GM12878 (cell line): ENCODE measurements at regions of chr2 and their contacts with region 1.

Region 1: DNA sequence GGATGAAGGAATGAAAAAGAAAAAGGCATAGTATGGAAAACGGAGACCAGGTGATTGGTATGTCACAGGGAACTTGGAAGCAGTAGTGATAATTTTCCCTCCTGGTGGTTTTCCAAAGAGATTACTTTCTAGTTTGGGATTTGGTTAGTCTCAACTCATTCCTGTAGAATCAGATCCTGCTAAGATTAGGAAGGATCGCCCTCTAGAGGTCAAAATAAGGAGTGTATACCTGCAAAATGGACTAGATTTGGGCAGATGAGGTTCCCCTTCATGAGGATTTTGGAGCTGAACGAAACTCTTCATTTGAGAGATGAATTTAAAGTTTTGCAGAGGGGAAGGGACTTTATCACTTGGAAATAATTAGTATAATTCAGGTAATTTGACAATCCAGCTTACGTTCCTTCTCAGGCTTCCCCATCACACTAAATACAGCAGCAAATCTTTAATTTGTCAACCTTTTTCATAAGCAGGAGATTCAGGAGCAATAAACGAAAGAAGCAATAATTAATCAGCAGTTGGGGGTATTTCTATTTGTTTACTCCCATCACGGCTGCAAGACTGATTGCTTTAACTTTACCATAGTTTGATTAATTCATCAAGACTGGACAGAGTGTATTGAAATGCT is 65.2 kb downstream of the CCDC195 start:
- DNase-seq: no peak
- ATAC-seq: peak; percentile 89
- H3K4me3 ChIP-seq: no peak overlapping the region
- H3K27ac ChIP-seq: no peak overlapping the region
- H3K4me1 ChIP-seq: no peaks in the 10 kb centered on the region
- H3K27me3 ChIP-seq: no peaks in the 10 kb centered on the region
- CTCF ChIP-seq: peak; percentile 71 to 73 (median 72)
- EP300 ChIP-seq: no peak
- POLR2A ChIP-seq: no peak
- RAD21 ChIP-seq: peak; percentile 93

Region 2: GRCh38 chr2:223970343-223971128 is 680.4 kb before region 1 on chr2:
- CTCF ChIA-PET with region 1: interaction called, 6 read pairs
- POLR2A ChIA-PET with region 1: no interaction called
- RAD21 ChIA-PET with region 1: interaction called, 6 read pairs
- SMC1A ChIA-PET with region 1: interaction called, 6 read pairs
- in situ Hi-C with region 1: loop called (anchors 25 kb)
- intact Hi-C with region 1: loop called (anchors 10 kb)
- DNase-seq: no peak
- ATAC-seq: peak; percentile 87
- H3K4me3 ChIP-seq: no peak overlapping the region
- H3K27ac ChIP-seq: no peak overlapping the region
- H3K4me1 ChIP-seq: no peaks in the 10 kb centered on the region
- H3K27me3 ChIP-seq: no peaks in the 10 kb centered on the region
- CTCF ChIP-seq: peak; percentile 73 to 91 (median 85); a peak in 5 of 6 replicates
- EP300 ChIP-seq: no peak
- POLR2A ChIP-seq: no peak
- RAD21 ChIP-seq: peak; percentile 84

Region 3: DNA sequence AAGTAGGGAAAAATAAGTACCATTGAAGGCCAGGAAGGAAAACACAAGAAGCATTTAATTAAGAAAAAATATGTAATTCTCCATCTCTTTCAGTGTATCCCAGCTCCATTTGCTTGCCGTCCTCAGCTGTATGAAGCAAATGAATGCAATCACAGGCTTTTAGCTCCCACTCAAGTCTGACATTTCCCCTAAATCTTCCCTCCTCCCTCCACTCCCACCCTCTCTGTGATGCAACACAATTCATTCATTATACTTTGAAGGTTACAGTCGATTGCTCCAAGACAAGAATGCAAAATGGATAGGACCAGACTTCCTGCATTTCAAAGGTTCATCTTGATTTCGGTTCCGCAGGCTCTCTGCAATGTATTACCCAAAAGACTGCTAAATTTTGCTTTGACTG is 439.1 kb before region 1 on chr2:
- CTCF ChIA-PET with region 1: no interaction called
- POLR2A ChIA-PET with region 1: no interaction called
- RAD21 ChIA-PET with region 1: no interaction called
- SMC1A ChIA-PET with region 1: no interaction called
- in situ Hi-C with region 1: no loop called
- intact Hi-C with region 1: no loop called
- DNase-seq: no peak
- ATAC-seq: no peak
- H3K4me3 ChIP-seq: no peak overlapping the region
- H3K27ac ChIP-seq: no peak overlapping the region
- H3K4me1 ChIP-seq: no peaks in the 10 kb centered on the region
- H3K27me3 ChIP-seq: no peaks in the 10 kb centered on the region; a peak in 1 of 4 replicates
- CTCF ChIP-seq: no peak
- EP300 ChIP-seq: no peak
- POLR2A ChIP-seq: no peak
- RAD21 ChIP-seq: no peak

Region 4: DNA sequence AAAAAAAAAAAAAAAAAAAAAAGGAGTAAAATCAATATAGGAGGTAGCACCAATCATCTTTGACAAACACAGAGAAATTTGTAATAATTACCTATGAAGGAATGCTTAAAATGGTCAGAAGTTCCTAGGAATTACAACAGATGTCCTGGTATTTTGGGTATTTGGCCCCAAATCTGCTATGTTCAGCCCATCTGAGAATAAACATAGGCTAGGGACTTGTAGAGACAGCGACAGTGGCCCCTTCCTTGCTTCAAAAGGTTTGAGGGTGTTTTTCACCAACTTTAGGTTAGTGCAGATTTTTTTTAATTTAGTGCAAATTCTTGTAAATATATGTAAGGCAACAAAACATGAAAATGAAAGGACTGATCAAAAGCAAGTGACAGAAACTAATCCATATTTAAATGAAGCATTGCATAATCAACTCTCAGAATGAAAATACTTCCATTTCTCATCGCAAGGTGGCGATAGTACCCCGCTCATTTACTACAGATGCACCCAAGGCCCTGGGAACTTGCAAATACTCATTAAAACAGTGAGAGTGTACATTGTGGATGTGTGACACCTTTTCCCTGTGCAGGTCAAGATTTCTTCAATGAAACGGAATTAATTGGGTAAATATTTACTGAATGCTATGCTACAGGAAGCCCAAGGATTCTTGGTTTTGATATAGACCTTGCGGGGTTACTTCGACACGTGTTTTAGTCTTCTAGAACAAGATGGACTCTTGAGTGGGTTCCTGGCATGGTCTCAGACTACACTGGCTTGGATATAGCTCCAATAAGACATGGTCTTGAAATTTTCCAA is 293.6 kb before region 1 on chr2:
- CTCF ChIA-PET with region 1: interaction called, 54 read pairs
- POLR2A ChIA-PET with region 1: no interaction called
- RAD21 ChIA-PET with region 1: interaction called, 32 read pairs
- SMC1A ChIA-PET with region 1: interaction called, 21 read pairs
- in situ Hi-C with region 1: loop called (anchors 5 kb)
- intact Hi-C with region 1: loop called (anchors 1 kb)
- DNase-seq: peak; percentile 11
- ATAC-seq: peak; percentile 93
- H3K4me3 ChIP-seq: no peak overlapping the region
- H3K27ac ChIP-seq: no peak overlapping the region
- H3K4me1 ChIP-seq: no peaks in the 10 kb centered on the region
- H3K27me3 ChIP-seq: no peaks in the 10 kb centered on the region; a peak in 2 of 4 replicates
- CTCF ChIP-seq: peak; percentile 63 to 88 (median 68); a peak in 5 of 6 replicates
- EP300 ChIP-seq: no peak
- POLR2A ChIP-seq: no peak
- RAD21 ChIP-seq: peak; percentile 90

Region 5: GRCh38 chr2:224449212-224450147 is 201.4 kb before region 1 on chr2:
- CTCF ChIA-PET with region 1: interaction called, 10 read pairs
- POLR2A ChIA-PET with region 1: no interaction called
- RAD21 ChIA-PET with region 1: interaction called, 5 read pairs
- SMC1A ChIA-PET with region 1: interaction called, 14 read pairs
- in situ Hi-C with region 1: no loop called
- intact Hi-C with region 1: no loop called
- DNase-seq: no peak
- ATAC-seq: peak; percentile 79
- H3K4me3 ChIP-seq: no peak overlapping the region
- H3K27ac ChIP-seq: no peak overlapping the region
- H3K4me1 ChIP-seq: no peaks in the 10 kb centered on the region
- H3K27me3 ChIP-seq: no peaks in the 10 kb centered on the region; a peak in 1 of 4 replicates
- CTCF ChIP-seq: peak; percentile 53 to 70 (median 61)
- EP300 ChIP-seq: no peak
- POLR2A ChIP-seq: no peak
- RAD21 ChIP-seq: peak; percentile 34; the same call in 1 of the 2 replicates

Region 6: GRCh38 chr2:224492531-224492930 is 158.4 kb before region 1 on chr2:
- CTCF ChIA-PET with region 1: interaction called, 5 read pairs
- POLR2A ChIA-PET with region 1: no interaction called
- RAD21 ChIA-PET with region 1: no interaction called
- SMC1A ChIA-PET with region 1: interaction called, 6 read pairs
- in situ Hi-C with region 1: no loop called
- intact Hi-C with region 1: loop called (anchors 10 kb)
- DNase-seq: no peak
- ATAC-seq: no peak
- H3K4me3 ChIP-seq: no peak overlapping the region
- H3K27ac ChIP-seq: no peak overlapping the region
- H3K4me1 ChIP-seq: no peaks in the 10 kb centered on the region
- H3K27me3 ChIP-seq: no peaks in the 10 kb centered on the region
- CTCF ChIP-seq: no peak
- EP300 ChIP-seq: no peak
- POLR2A ChIP-seq: no peak
- RAD21 ChIP-seq: no peak

Region 7: GRCh38 chr2:224585205-224586088 is 65.5 kb before region 1 on chr2 and contains the start of gene CUL3:
- CTCF ChIA-PET with region 1: interaction called, 16 read pairs
- POLR2A ChIA-PET with region 1: interaction called, 3 read pairs
- RAD21 ChIA-PET with region 1: interaction called, 3 read pairs
- SMC1A ChIA-PET with region 1: interaction called, 4 read pairs
- in situ Hi-C with region 1: no loop called
- intact Hi-C with region 1: loop called (anchors 5 kb)
- DNase-seq: peak; percentile 90
- ATAC-seq: peak; percentile 88
- H3K4me3 ChIP-seq: peak within 1 kb of the TSS; percentile 96
- H3K27ac ChIP-seq: peak within 1 kb of the TSS; percentile 88
- H3K4me1 ChIP-seq: no peaks in the 10 kb centered on the region
- H3K27me3 ChIP-seq: no peaks in the 10 kb centered on the region
- CTCF ChIP-seq: no peak
- EP300 ChIP-seq: 0 out of 4 replicates have a peak, but pooled peaks of 1 of the 2 experiments have one; percentile 10
- POLR2A ChIP-seq: peak; percentile 90
- RAD21 ChIP-seq: no peak
- polyA plus RNA-seq, gene CUL3: 49.0 to 71.9 TPM

Region 8: GRCh38 chr2:224638301-224638823 is 12.6 kb before region 1 on chr2:
- CTCF ChIA-PET with region 1: interaction called, 35 read pairs
- POLR2A ChIA-PET with region 1: no interaction called
- RAD21 ChIA-PET with region 1: interaction called, 4 read pairs
- SMC1A ChIA-PET with region 1: interaction called, 7 read pairs
- in situ Hi-C with region 1: no loop called
- intact Hi-C with region 1: no loop called
- DNase-seq: peak; percentile 55
- ATAC-seq: peak; percentile 93
- H3K4me3 ChIP-seq: no peak overlapping the region
- H3K27ac ChIP-seq: peak overlapping the region; percentile 32; the same call in 1 of the 2 replicates
- H3K4me1 ChIP-seq: peaks cover 4% of the 10 kb centered on the region; the same call in 1 of the 2 replicates
- H3K27me3 ChIP-seq: no peaks in the 10 kb centered on the region
- CTCF ChIP-seq: no peak
- EP300 ChIP-seq: 0 out of 4 replicates have a peak, but pooled peaks of 1 of the 2 experiments have one; percentile 28
- POLR2A ChIP-seq: no peak
- RAD21 ChIP-seq: no peak

Region 9: DNA sequence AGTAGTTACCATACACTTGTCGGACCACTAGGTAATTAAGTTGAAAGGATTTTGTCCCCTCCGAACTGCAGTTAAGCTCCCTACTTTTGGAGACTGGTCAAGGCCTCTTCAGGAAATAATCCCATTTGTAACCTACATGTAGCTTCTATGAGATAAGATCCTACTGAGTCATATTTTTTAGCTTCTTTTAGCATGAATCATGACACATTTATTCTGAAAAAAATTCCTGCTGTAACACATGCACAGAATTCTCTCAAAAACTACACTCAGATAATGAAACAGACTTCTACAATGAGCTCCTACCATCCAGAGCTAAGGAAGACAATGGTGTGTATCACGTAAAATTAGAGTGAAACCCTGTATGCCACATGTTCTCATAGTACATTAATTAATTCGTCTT is 165.9 kb after region 1 on chr2:
- CTCF ChIA-PET with region 1: no interaction called
- POLR2A ChIA-PET with region 1: no interaction called
- RAD21 ChIA-PET with region 1: no interaction called
- SMC1A ChIA-PET with region 1: no interaction called
- in situ Hi-C with region 1: no loop called
- intact Hi-C with region 1: no loop called
- DNase-seq: no peak
- ATAC-seq: no peak
- H3K4me3 ChIP-seq: no peak overlapping the region
- H3K27ac ChIP-seq: no peak overlapping the region
- H3K4me1 ChIP-seq: no peaks in the 10 kb centered on the region
- H3K27me3 ChIP-seq: no peaks in the 10 kb centered on the region
- CTCF ChIP-seq: no peak
- EP300 ChIP-seq: no peak
- POLR2A ChIP-seq: no peak
- RAD21 ChIP-seq: no peak

Region 10: DNA sequence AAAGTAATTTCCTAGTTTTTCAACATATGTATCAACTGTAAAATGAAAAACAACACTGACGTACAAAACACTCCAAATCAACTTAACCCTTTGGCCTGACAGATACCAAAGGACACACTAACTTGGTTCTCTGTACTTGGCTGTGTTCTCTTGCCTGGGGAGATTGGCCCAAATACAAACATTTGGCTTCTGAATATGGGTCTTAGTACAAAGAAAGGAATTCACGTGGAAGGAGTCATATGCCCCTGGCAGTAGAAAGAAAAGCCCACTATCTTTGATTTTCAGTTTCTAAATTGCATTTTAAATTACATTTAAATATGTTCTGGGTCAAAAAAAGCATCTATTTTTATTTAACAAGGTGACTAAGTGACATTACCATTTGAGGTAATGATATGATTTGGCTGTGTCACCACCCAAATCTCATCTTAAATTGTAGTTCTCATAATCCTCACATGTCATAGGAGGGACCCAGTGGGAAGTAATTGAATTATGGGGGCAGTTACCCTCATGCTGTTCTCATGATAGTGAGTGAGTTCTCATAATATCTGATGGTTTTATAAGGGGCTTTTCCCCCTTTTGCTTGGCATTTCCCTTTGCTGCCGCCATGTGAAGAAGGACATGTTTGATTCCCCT is 218.8 kb after region 1 on chr2:
- CTCF ChIA-PET with region 1: no interaction called
- POLR2A ChIA-PET with region 1: no interaction called
- RAD21 ChIA-PET with region 1: no interaction called
- SMC1A ChIA-PET with region 1: no interaction called
- in situ Hi-C with region 1: no loop called
- intact Hi-C with region 1: no loop called
- DNase-seq: no peak
- ATAC-seq: no peak
- H3K4me3 ChIP-seq: no peak overlapping the region
- H3K27ac ChIP-seq: no peak overlapping the region
- H3K4me1 ChIP-seq: no peaks in the 10 kb centered on the region
- H3K27me3 ChIP-seq: no peaks in the 10 kb centered on the region
- CTCF ChIP-seq: no peak
- EP300 ChIP-seq: no peak
- POLR2A ChIP-seq: no peak
- RAD21 ChIP-seq: no peak

Region 11: DNA sequence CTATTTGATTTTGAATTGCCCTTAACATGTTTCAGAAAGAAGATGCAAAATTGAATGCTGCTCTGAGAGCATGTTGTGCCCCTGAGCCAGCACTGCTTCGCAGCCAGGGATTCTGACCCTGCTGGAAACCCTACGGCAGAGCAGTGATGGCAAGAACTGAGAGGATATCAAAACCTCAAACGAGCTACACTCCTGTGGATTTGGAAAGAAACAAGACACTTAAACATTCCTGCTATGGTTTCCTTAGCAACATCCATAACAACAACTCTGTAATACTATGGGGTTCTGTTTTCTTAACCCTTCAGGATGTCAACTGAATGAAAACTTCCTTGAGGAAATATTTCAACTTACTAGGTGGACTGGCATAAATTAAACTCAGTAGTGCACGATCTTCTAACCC is 1397.7 kb after region 1 on chr2:
- CTCF ChIA-PET with region 1: no interaction called
- POLR2A ChIA-PET with region 1: no interaction called
- RAD21 ChIA-PET with region 1: no interaction called
- SMC1A ChIA-PET with region 1: no interaction called
- in situ Hi-C with region 1: no loop called
- intact Hi-C with region 1: no loop called
- DNase-seq: no peak
- ATAC-seq: no peak
- H3K4me3 ChIP-seq: no peak overlapping the region
- H3K27ac ChIP-seq: no peak overlapping the region
- H3K4me1 ChIP-seq: no peaks in the 10 kb centered on the region
- H3K27me3 ChIP-seq: no peaks in the 10 kb centered on the region
- CTCF ChIP-seq: no peak
- EP300 ChIP-seq: no peak
- POLR2A ChIP-seq: no peak
- RAD21 ChIP-seq: no peak